Activated B cell treated with CpG ODN at 0.5 μM for 24 hours (primary cell): ENCODE measurements at regions of chr1 and their contacts with region 1.

Region 1: DNA sequence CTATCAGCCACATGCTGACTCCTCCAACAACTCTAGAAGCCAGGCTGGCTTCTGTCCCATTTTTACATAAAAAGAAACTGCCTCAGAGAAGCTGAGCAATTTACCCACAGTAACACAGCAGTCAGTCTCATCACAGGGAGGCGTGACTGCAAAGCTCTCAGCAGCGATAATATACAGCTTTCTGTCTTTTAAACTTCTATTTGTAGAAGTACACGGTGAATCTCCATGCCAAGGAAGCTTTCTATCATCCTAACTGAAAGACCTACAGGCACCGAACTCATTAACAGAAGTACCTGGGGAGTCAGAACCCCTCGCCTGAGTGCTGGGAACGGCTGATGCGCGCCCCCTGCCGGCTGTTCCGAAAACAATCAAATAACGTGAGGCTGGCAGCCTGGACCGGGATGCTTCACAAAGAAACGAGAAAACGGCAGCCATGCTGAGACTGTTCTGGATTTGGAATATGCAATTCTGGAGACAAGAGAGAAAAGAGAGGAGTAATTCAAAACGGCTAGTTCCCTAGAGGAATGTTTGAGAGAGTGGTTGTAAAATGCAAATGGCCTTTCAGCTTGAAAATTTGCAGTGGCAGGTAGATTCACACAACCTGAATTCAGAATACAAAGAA is 43.5 kb upstream of the RAB4A start:
- DNase-seq: peak; percentile 58
- ATAC-seq: no peak
- H3K4me3 Mint-ChIP-seq: no peak overlapping the region
- H3K27ac Mint-ChIP-seq: no peak overlapping the region
- H3K4me1 Mint-ChIP-seq: peaks cover 8% of the 10 kb centered on the region
- H3K27me3 Mint-ChIP-seq: peaks cover 35% of the 10 kb centered on the region
- CTCF ChIP-seq: peak; percentile 72

Region 2: GRCh38 chr1:227489572-227489971 is 1737.8 kb before region 1 on chr1:
- CTCF ChIA-PET with region 1: no interaction called
- POLR2A ChIA-PET with region 1: no interaction called
- intact Hi-C with region 1: loop called (anchors 10 kb)
- DNase-seq: no peak
- ATAC-seq: no peak
- H3K4me3 Mint-ChIP-seq: no peak overlapping the region
- H3K27ac Mint-ChIP-seq: no peak overlapping the region
- H3K4me1 Mint-ChIP-seq: peaks cover 7% of the 10 kb centered on the region
- H3K27me3 Mint-ChIP-seq: no peaks in the 10 kb centered on the region
- CTCF ChIP-seq: no peak

Region 3: DNA sequence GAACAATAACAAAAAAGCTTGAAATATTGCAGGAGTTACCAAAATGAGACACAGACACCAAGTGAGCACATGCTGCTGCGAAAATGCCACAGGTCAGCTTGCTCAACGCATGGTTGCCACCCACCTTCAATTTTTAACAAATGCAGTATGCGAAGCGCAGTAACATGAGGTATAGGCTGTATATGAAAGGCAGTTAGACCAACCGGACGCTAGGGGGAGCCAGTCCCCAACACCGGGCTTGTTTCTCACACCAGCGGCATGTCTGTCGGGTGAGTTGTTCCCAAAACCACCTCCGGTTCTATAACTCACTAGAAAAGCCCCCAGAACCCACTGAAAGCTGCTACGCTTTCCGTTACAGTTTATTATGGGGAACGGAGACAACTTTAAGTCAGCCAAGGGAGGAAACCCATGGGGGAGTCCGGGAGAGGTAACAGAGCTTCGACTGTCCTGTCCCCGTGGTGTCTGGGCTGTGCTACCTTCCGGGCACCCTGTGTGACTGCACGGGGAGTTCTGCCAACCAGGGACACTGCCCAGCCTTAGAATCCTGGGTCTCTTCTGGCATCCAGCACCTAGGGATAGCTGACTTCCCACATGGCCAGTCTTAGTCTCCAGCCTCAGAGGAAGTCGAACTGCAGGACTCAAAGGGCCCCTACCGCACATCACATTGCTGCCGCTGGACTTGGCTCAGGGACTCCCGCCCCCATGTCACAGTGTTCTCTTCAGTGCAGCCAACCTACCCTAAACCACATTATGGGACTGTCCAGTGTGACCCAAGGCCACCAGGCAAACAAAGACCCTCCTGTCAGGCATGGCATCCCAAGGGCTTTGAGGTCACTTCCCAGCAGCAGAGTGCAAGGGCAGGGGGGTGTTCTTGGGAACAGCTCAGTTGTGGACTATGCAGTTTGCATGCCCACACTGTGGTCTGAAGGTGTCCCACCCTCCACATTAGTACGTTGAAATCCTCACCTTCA is 726.2 kb before region 1 on chr1:
- CTCF ChIA-PET with region 1: interaction called, 5 read pairs
- POLR2A ChIA-PET with region 1: no interaction called
- intact Hi-C with region 1: loop called (anchors 2 kb)
- DNase-seq: peak; percentile 72
- ATAC-seq: peak; percentile 96
- H3K4me3 Mint-ChIP-seq: peak overlapping the region; percentile 77
- H3K27ac Mint-ChIP-seq: peak overlapping the region; percentile 84
- H3K4me1 Mint-ChIP-seq: peaks cover 17% of the 10 kb centered on the region
- H3K27me3 Mint-ChIP-seq: peaks cover 9% of the 10 kb centered on the region
- CTCF ChIP-seq: peak; percentile 91

Region 4: GRCh38 chr1:228664399-228664914 is 563.0 kb before region 1 on chr1:
- CTCF ChIA-PET with region 1: interaction called, 67 read pairs
- POLR2A ChIA-PET with region 1: no interaction called
- intact Hi-C with region 1: loop called (anchors 1 kb)
- DNase-seq: peak; percentile 52
- ATAC-seq: peak; percentile 49
- H3K4me3 Mint-ChIP-seq: no peak overlapping the region
- H3K27ac Mint-ChIP-seq: no peak overlapping the region
- H3K4me1 Mint-ChIP-seq: no peaks in the 10 kb centered on the region
- H3K27me3 Mint-ChIP-seq: peaks cover 8% of the 10 kb centered on the region
- CTCF ChIP-seq: peak; percentile 77

Region 5: DNA sequence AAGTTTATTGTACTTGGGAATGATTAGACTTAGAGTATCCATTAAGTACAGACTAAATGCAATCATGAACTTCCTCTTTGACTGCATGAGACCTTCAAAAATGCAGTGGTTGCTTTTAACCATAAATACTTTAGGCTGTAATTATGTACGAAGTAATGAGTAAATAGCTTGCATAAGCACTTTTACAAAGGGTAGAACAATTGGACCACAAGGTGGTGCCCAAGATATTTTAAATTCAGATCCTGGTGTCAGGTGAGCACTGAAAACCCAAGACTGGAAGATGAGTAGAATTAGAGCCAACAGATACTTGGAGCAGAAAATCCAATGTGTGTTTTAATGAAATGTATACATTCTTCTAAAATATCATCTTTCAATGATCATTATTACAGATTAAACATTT is 535.5 kb before region 1 on chr1:
- CTCF ChIA-PET with region 1: interaction called, 6 read pairs
- POLR2A ChIA-PET with region 1: no interaction called
- intact Hi-C with region 1: loop called (anchors 1 kb)
- DNase-seq: no peak
- ATAC-seq: no peak
- H3K4me3 Mint-ChIP-seq: no peak overlapping the region
- H3K27ac Mint-ChIP-seq: no peak overlapping the region
- H3K4me1 Mint-ChIP-seq: no peaks in the 10 kb centered on the region
- H3K27me3 Mint-ChIP-seq: peaks cover 28% of the 10 kb centered on the region
- CTCF ChIP-seq: no peak

Region 6: GRCh38 chr1:228734881-228735801 is 492.3 kb before region 1 on chr1 and contains the start of gene RHOU:
- CTCF ChIA-PET with region 1: no interaction called
- POLR2A ChIA-PET with region 1: no interaction called
- intact Hi-C with region 1: loop called (anchors 1 kb)
- DNase-seq: no peak
- ATAC-seq: peak; percentile 47
- H3K4me3 Mint-ChIP-seq: peak within 1 kb of the TSS; percentile 46
- H3K27ac Mint-ChIP-seq: no peak within 1 kb of the TSS
- H3K4me1 Mint-ChIP-seq: peaks cover 12% of the 10 kb centered on the region
- H3K27me3 Mint-ChIP-seq: peaks cover 36% of the 10 kb centered on the region
- CTCF ChIP-seq: no peak
- total RNA-seq, gene RHOU: 0.22 and 0.44 TPM in 2 replicates

Region 7: GRCh38 chr1:228742281-228742860 is 485.0 kb before region 1 on chr1:
- CTCF ChIA-PET with region 1: no interaction called
- POLR2A ChIA-PET with region 1: no interaction called
- intact Hi-C with region 1: loop called (anchors 2 kb)
- DNase-seq: no peak
- ATAC-seq: no peak
- H3K4me3 Mint-ChIP-seq: no peak overlapping the region
- H3K27ac Mint-ChIP-seq: no peak overlapping the region
- H3K4me1 Mint-ChIP-seq: no peaks in the 10 kb centered on the region
- H3K27me3 Mint-ChIP-seq: peaks cover 26% of the 10 kb centered on the region
- CTCF ChIP-seq: no peak

Region 8: DNA sequence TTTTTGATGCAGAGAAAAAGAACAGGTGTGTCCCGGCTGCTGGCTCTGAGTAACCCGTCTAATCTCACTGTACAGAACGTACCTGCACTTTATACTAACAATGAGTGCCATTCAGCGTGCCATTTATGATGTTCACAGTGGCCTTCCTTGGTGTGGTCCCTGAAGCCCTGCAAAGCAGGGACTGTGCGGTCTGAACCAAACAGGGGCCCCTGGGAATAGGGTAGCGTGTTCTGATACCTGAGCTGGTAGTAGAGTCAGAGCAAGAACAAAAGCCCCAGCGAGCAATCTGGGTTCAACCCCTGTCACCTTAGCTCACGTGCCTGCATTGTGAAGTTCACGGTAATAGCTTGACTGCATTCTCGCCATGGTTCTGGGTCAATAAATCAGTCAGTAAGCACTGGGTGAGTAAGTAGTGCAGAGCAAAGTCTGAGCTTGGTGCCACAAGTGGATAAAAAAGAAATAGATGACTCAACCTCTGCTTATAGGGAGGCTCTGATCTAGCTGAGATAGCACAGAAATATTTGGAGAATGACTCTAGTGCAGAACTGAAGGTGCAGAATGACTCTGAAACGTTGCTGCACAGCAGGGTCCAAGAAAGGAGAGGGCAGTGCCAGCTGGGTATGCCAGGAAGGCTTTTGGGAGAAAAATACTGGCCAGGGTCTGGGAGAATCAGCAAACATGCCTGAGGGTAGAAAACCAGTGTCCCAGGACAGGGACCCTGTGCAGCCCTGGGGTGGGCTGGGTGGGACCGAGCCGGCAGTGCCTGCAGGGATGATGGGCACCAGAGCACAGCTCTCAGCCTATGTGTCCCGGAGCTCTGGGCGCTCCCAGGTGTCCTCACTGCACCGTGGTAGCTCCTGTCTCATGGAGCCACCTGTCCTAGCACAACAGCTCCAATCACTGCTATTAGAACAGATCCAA is 366.2 kb before region 1 on chr1:
- CTCF ChIA-PET with region 1: no interaction called
- POLR2A ChIA-PET with region 1: no interaction called
- intact Hi-C with region 1: no loop called
- DNase-seq: no peak
- ATAC-seq: no peak
- H3K4me3 Mint-ChIP-seq: no peak overlapping the region
- H3K27ac Mint-ChIP-seq: no peak overlapping the region
- H3K4me1 Mint-ChIP-seq: peaks cover 2% of the 10 kb centered on the region
- H3K27me3 Mint-ChIP-seq: peaks cover 21% of the 10 kb centered on the region
- CTCF ChIP-seq: no peak